ENCODE measurements at regions of chr15 and their contacts with region 1.

Region 1: GRCh38 chr15:58469432-58470353 is 37.9 kb downstream of the LIPC start:
- DNase-seq: peak; percentile 86 to 91
- H3K4me3 ChIP-seq: no peak overlapping the region
- H3K4me3 Mint-ChIP-seq: peak overlapping the region; percentile 57
- H3K27ac Mint-ChIP-seq: peak overlapping the region; percentile 86
- H3K4me1 ChIP-seq: peaks cover 69% of the 10 kb centered on the region
- H3K4me1 Mint-ChIP-seq: peaks cover 49% of the 10 kb centered on the region
- H3K27me3 ChIP-seq: no peaks in the 10 kb centered on the region
- H3K27me3 Mint-ChIP-seq: no peaks in the 10 kb centered on the region
- CTCF ChIP-seq: no peak

Region 2: GRCh38 chr15:58227706-58228543 is 241.8 kb before region 1 on chr15:
- CTCF ChIA-PET with region 1: interaction called, 3 read pairs
- POLR2A ChIA-PET with region 1: no interaction called
- intact Hi-C with region 1: loop called (anchors 10 kb)
- DNase-seq: peak; percentile 61 to 79
- H3K4me3 ChIP-seq: no peak overlapping the region
- H3K4me3 Mint-ChIP-seq: no peak overlapping the region
- H3K27ac Mint-ChIP-seq: no peak overlapping the region
- H3K4me1 ChIP-seq: peaks cover 5% of the 10 kb centered on the region; the same call in 1 of the 2 replicates
- H3K4me1 Mint-ChIP-seq: peaks cover 10% of the 10 kb centered on the region
- H3K27me3 ChIP-seq: no peaks in the 10 kb centered on the region
- H3K27me3 Mint-ChIP-seq: no peaks in the 10 kb centered on the region
- CTCF ChIP-seq: peak; percentile 81 to 85

Region 3: DNA sequence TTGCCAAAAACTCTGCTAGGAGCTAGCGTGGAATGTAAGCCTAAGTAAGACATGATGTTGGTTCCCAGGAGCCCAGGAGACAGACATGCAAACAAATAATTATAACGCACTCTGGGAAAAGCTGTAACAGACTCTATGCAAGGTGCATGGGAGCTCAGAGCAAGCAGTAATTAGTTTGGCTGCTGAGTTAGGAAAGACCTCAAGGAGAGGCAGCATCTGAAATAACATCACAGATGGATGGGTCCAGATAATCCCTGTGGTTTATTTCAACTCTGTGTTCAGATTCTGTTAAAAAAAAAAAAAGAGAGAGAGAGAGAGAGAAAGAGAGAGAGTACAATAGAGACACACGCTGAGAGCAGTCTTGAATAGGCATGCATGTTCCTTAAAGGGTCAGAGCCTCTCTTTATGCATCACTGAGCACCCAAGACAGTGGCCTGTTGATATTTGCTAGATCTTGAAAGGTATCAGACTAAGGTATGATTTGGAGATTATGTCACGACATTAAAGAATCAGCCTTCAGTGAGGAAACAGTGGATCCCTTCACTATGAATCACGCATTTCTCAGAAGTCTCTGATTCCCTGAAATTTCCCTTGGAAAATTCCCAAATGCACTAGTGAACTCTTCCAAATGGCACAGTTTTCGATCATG is 162.3 kb before region 1 on chr15:
- CTCF ChIA-PET with region 1: no interaction called
- POLR2A ChIA-PET with region 1: no interaction called
- intact Hi-C with region 1: no loop called
- DNase-seq: no peak
- H3K4me3 ChIP-seq: no peak overlapping the region
- H3K4me3 Mint-ChIP-seq: no peak overlapping the region
- H3K27ac Mint-ChIP-seq: no peak overlapping the region
- H3K4me1 ChIP-seq: no peaks in the 10 kb centered on the region
- H3K4me1 Mint-ChIP-seq: no peaks in the 10 kb centered on the region
- H3K27me3 ChIP-seq: no peaks in the 10 kb centered on the region; the same call in 1 of the 2 replicates
- H3K27me3 Mint-ChIP-seq: no peaks in the 10 kb centered on the region
- CTCF ChIP-seq: no peak

Region 4: DNA sequence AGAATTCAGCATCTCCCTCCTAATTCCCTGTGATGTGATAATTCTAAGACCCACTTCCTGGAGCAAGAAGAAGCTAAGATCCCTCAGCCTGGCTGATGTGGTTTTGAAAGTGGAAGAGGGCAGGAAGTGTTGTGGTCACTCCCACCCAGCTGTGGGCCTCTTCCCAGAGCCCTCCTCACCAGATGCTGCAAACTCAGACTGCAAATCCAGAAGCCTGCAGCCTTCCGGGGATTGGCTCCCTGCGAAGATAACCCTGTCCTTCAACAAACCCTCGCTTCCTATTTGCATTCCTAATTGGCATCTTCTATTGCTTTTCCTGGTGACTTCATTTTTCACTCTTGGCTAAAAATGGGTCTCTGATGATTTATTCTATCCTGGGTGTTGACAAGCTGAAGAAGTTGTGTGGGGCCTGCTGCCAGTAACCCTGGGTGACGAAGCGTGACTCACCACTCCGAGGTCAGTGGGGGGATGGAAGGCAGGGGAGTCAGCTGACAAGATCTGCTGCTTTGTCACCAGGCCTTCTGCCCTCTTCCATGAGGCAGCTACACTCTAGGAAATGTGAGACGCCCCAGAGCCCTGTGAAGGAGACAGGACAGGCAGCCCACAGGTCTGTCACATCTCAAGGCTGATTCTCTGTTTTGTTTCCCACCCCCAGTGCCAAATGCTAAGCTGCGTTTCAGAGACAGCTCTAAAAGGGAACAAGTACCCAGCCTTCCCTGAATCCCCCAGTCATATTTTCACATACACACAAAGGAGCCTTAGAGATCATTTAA is 137.6 kb before region 1 on chr15:
- CTCF ChIA-PET with region 1: no interaction called
- POLR2A ChIA-PET with region 1: no interaction called
- intact Hi-C with region 1: loop called (anchors 5 kb)
- DNase-seq: peak; percentile 84 to 91
- H3K4me3 ChIP-seq: no peak overlapping the region
- H3K4me3 Mint-ChIP-seq: peak overlapping the region; percentile 30
- H3K27ac Mint-ChIP-seq: peak overlapping the region; percentile 94
- H3K4me1 ChIP-seq: peaks cover 36% of the 10 kb centered on the region
- H3K4me1 Mint-ChIP-seq: peaks cover 42% of the 10 kb centered on the region
- H3K27me3 ChIP-seq: no peaks in the 10 kb centered on the region
- H3K27me3 Mint-ChIP-seq: no peaks in the 10 kb centered on the region
- CTCF ChIP-seq: no peak

Region 5: DNA sequence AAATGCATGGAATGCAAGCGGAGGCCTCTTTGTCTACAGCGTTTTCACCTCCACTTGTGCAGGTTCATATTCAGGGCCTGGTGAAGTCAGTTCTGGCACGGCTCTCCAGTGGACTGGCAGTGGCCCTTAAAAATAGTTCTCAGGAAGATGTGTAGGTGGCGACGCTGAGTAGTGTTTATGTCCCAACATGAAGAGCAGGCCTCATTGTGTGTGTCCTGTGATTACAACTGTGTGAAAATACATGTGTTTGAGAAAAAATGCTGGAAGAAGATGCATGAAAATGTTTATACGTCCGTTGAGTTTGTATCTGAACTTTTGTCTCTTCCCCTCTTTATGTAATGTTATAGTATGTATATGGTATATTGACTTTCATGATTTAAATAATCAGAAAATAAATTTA is 30.7 kb before region 1 on chr15:
- CTCF ChIA-PET with region 1: no interaction called
- POLR2A ChIA-PET with region 1: no interaction called
- intact Hi-C with region 1: no loop called
- DNase-seq: peak; percentile 54 to 70
- H3K4me3 ChIP-seq: no peak overlapping the region
- H3K4me3 Mint-ChIP-seq: no peak overlapping the region
- H3K27ac Mint-ChIP-seq: peak overlapping the region; percentile 71
- H3K4me1 ChIP-seq: peaks cover 83% of the 10 kb centered on the region
- H3K4me1 Mint-ChIP-seq: peaks cover 41% of the 10 kb centered on the region
- H3K27me3 ChIP-seq: no peaks in the 10 kb centered on the region
- H3K27me3 Mint-ChIP-seq: no peaks in the 10 kb centered on the region
- CTCF ChIP-seq: peak; percentile 24 to 40

Region 6: DNA sequence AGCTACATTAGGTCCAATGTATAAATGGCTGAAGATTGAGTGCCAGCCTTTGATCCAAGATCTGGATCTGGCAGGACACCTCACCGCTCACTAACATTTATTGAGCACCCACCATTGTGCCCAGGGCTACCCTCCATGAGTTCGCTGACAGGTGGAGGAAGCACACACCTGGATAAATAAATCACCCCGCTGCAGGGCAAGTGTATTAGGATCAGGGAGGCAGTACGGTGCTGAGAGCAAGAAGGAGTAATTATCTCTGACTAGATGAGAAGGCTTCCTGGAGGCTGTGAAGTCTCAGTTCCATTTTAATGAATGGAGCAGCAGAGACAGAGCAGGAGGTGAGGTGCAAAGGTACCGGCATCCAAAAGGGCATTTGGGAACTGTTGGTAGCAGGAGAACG is 66.2 kb after region 1 on chr15:
- CTCF ChIA-PET with region 1: no interaction called
- POLR2A ChIA-PET with region 1: interaction called, 3 read pairs
- intact Hi-C with region 1: loop called (anchors 1 kb)
- DNase-seq: no peak
- H3K4me3 ChIP-seq: no peak overlapping the region
- H3K4me3 Mint-ChIP-seq: no peak overlapping the region
- H3K27ac Mint-ChIP-seq: peak overlapping the region; percentile 45
- H3K4me1 ChIP-seq: peaks cover 38% of the 10 kb centered on the region
- H3K4me1 Mint-ChIP-seq: peaks cover 51% of the 10 kb centered on the region
- H3K27me3 ChIP-seq: no peaks in the 10 kb centered on the region
- H3K27me3 Mint-ChIP-seq: no peaks in the 10 kb centered on the region
- CTCF ChIP-seq: no peak

Region 7: GRCh38 chr15:58678683-58679082 is 209.0 kb after region 1 on chr15:
- CTCF ChIA-PET with region 1: no interaction called
- POLR2A ChIA-PET with region 1: no interaction called
- intact Hi-C with region 1: no loop called
- DNase-seq: no peak
- H3K4me3 ChIP-seq: no peak overlapping the region
- H3K4me3 Mint-ChIP-seq: no peak overlapping the region
- H3K27ac Mint-ChIP-seq: no peak overlapping the region
- H3K4me1 ChIP-seq: no peaks in the 10 kb centered on the region; the same call in 1 of the 2 replicates
- H3K4me1 Mint-ChIP-seq: no peaks in the 10 kb centered on the region
- H3K27me3 ChIP-seq: no peaks in the 10 kb centered on the region
- H3K27me3 Mint-ChIP-seq: no peaks in the 10 kb centered on the region
- CTCF ChIP-seq: no peak

Region 8: DNA sequence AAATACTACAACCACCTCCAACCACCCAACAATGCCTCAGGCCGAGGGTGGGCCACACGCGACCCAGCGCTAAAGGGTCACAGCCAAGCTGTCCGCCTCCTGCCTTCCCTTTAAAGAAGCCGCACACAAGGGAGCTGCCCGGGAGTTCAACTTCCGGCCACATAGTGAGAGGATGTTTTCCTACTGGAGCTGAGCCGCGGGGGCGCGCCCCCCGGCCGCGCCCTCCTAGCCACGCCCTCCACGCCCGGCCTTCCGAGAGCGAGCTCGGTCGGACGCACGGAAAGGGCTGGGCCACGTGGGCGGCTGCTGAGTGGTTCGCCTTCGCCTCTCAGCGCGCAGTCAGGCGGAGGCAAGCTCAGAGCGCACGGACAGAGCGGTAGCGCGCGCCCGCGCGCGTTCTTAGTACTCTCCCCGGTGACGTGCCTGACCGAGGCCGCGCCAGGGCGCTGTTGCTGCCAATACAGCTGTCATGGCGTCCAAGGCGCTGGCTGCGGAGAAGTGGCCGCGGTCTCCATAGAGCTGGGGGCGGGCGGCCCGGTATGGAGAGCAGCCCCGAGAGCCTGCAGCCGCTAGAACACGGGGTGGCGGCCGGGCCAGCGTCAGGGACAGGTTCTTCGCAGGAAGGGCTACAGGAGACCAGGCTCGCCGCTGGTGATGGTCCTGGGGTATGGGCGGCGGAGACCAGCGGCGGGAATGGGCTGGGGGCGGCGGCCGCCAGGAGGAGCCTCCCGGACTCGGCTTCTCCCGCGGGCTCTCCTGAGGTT is 301.3 kb after region 1 on chr15 and contains the start of gene MINDY2:
- CTCF ChIA-PET with region 1: no interaction called
- POLR2A ChIA-PET with region 1: interaction called, 3 read pairs
- intact Hi-C with region 1: loop called (anchors 10 kb)
- DNase-seq: peak; percentile 97
- H3K4me3 ChIP-seq: peak within 1 kb of the TSS; percentile 99
- H3K4me3 Mint-ChIP-seq: no peak within 1 kb of the TSS
- H3K27ac Mint-ChIP-seq: peak within 1 kb of the TSS; percentile 85
- H3K4me1 ChIP-seq: peaks cover 10% of the 10 kb centered on the region
- H3K4me1 Mint-ChIP-seq: no peaks in the 10 kb centered on the region
- H3K27me3 ChIP-seq: no peaks in the 10 kb centered on the region
- H3K27me3 Mint-ChIP-seq: no peaks in the 10 kb centered on the region
- CTCF ChIP-seq: peak; percentile 35 to 42
- total RNA-seq, gene MINDY2: 24.0 and 25.5 TPM in 2 replicates

Measured in Caco-2 (cell line).